ENCODE measurements at regions of chr10 and their contacts with region 1.

Region 1: DNA sequence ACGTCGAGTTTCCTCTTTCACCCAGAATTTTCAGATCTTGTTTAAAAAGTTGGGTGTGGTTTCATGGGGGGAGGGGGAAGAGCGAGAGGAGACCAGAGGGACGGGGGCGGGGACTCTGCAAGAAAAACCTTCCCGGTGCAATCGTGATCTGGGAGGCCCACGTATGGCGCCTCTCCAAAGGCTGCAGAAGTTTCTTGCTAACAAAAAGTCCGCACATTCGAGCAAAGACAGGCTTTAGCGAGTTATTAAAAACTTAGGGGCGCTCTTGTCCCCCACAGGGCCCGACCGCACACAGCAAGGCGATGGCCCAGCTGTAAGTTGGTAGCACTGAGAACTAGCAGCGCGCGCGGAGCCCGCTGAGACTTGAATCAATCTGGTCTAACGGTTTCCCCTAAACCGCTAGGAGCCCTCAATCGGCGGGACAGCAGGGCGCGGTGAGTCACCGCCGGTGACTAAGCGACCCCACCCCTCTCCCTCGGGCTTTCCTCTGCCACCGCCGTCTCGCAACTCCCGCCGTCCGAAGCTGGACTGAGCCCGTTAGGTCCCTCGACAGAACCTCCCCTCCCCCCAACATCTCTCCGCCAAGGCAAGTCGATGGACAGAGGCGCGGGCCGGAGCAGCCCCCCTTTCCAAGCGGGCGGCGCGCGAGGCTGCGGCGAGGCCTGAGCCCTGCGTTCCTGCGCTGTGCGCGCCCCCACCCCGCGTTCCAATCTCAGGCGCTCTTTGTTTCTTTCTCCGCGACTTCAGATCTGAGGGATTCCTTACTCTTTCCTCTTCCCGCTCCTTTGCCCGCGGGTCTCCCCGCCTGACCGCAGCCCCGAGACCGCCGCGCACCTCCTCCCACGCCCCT is at the start of gene VIM:
- DNase-seq: peak; percentile 65 to 93 (median 88)
- ATAC-seq: peak; percentile 26
- H3K4me3 ChIP-seq: peak within 1 kb of the TSS; percentile 76 to 82
- H3K4me3 Mint-ChIP-seq: peak within 1 kb of the TSS; percentile 99
- H3K27ac ChIP-seq: peak within 1 kb of the TSS; percentile 92 to 98
- H3K27ac Mint-ChIP-seq: peak within 1 kb of the TSS; percentile 100
- H3K4me1 ChIP-seq: peaks cover 41% of the 10 kb centered on the region
- H3K4me1 Mint-ChIP-seq: peaks cover 50% of the 10 kb centered on the region
- H3K27me3 ChIP-seq: no peaks in the 10 kb centered on the region
- H3K27me3 Mint-ChIP-seq: no peaks in the 10 kb centered on the region
- CTCF ChIP-seq: no peak
- total RNA-seq, gene VIM: 776 to 783 TPM

Region 2: GRCh38 chr10:16843252-16843870 is 385.0 kb before region 1 on chr10:
- CTCF ChIA-PET with region 1: interaction called, 5 read pairs
- POLR2A ChIA-PET with region 1: interaction called, 3 read pairs
- intact Hi-C with region 1: loop called in 1 of 2 experiments (anchors 1 kb)
- DNase-seq: peak in 3 of 9 experiments; percentile 16 to 78 (median 63)
- ATAC-seq: peak; percentile 51
- H3K4me3 ChIP-seq: no peak overlapping the region
- H3K4me3 Mint-ChIP-seq: no peak overlapping the region
- H3K27ac ChIP-seq: no peak overlapping the region
- H3K27ac Mint-ChIP-seq: no peak overlapping the region
- H3K4me1 ChIP-seq: no peaks in the 10 kb centered on the region
- H3K4me1 Mint-ChIP-seq: no peaks in the 10 kb centered on the region
- H3K27me3 ChIP-seq: no peaks in the 10 kb centered on the region
- H3K27me3 Mint-ChIP-seq: no peaks in the 10 kb centered on the region
- CTCF ChIP-seq: peak; percentile 72

Region 3: GRCh38 chr10:17001961-17002749 is 226.2 kb before region 1 on chr10:
- CTCF ChIA-PET with region 1: no interaction called
- POLR2A ChIA-PET with region 1: interaction called, 4 read pairs
- intact Hi-C with region 1: loop called in 1 of 2 experiments (anchors 2 kb)
- DNase-seq: peak in 5 of 9 experiments; percentile 21 to 92 (median 43)
- ATAC-seq: peak; percentile 22
- H3K4me3 ChIP-seq: no peak overlapping the region
- H3K4me3 Mint-ChIP-seq: no peak overlapping the region
- H3K27ac ChIP-seq: peak overlapping the region; percentile 33 to 40
- H3K27ac Mint-ChIP-seq: peak overlapping the region; percentile 87
- H3K4me1 ChIP-seq: peaks cover 41% of the 10 kb centered on the region
- H3K4me1 Mint-ChIP-seq: peaks cover 47% of the 10 kb centered on the region
- H3K27me3 ChIP-seq: no peaks in the 10 kb centered on the region
- H3K27me3 Mint-ChIP-seq: no peaks in the 10 kb centered on the region
- CTCF ChIP-seq: no peak

Region 4: DNA sequence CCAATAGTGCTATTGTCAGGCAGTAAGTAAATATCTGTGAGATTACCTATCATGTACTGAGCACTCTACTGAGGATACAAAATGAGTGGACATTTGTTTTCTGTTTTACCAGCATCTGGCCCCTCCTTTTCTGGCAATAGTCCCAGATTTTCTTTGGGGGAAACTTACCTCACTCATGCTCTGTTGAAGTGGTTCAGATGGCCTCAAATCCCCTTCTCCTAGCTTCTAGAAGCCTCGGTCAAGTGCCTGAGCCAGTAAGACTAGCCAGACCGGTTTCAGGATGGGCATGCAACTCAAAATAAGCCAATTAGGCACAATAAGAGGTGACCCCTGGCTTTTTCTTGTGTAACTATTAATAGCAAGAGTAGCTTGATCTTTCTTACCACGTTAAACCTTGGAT is 46.6 kb before region 1 on chr10:
- CTCF ChIA-PET with region 1: no interaction called
- POLR2A ChIA-PET with region 1: interaction called, 3 read pairs
- intact Hi-C with region 1: loop called in 1 of 2 experiments (anchors 10 kb)
- DNase-seq: no peak
- ATAC-seq: no peak
- H3K4me3 ChIP-seq: no peak overlapping the region
- H3K4me3 Mint-ChIP-seq: no peak overlapping the region
- H3K27ac ChIP-seq: no peak overlapping the region
- H3K27ac Mint-ChIP-seq: peak overlapping the region; percentile 27
- H3K4me1 ChIP-seq: no peaks in the 10 kb centered on the region
- H3K4me1 Mint-ChIP-seq: peaks cover 4% of the 10 kb centered on the region
- H3K27me3 ChIP-seq: no peaks in the 10 kb centered on the region
- H3K27me3 Mint-ChIP-seq: no peaks in the 10 kb centered on the region
- CTCF ChIP-seq: no peak

Region 5: GRCh38 chr10:17216217-17216900 is 12.0 kb before region 1 on chr10:
- CTCF ChIA-PET with region 1: interaction called, 8 read pairs
- POLR2A ChIA-PET with region 1: interaction called, 9 read pairs
- intact Hi-C with region 1: loop called in 1 of 2 experiments (anchors 1 kb)
- DNase-seq: peak in 4 of 9 experiments; percentile 29 to 76 (median 49)
- ATAC-seq: peak; percentile 89
- H3K4me3 ChIP-seq: no peak overlapping the region
- H3K4me3 Mint-ChIP-seq: no peak overlapping the region
- H3K27ac ChIP-seq: peak overlapping the region; percentile 21 to 71
- H3K27ac Mint-ChIP-seq: peak overlapping the region; percentile 80
- H3K4me1 ChIP-seq: no peaks in the 10 kb centered on the region
- H3K4me1 Mint-ChIP-seq: peaks cover 11% of the 10 kb centered on the region
- H3K27me3 ChIP-seq: no peaks in the 10 kb centered on the region
- H3K27me3 Mint-ChIP-seq: no peaks in the 10 kb centered on the region
- CTCF ChIP-seq: no peak

Region 6: GRCh38 chr10:17643755-17644484 is 415.6 kb after region 1 on chr10 and contains the start of gene STAM:
- CTCF ChIA-PET with region 1: no interaction called
- POLR2A ChIA-PET with region 1: interaction called, 7 read pairs
- intact Hi-C with region 1: loop called (anchors 5 to 10 kb)
- DNase-seq: peak; percentile 87 to 96 (median 93)
- ATAC-seq: peak; percentile 86
- H3K4me3 ChIP-seq: peak within 1 kb of the TSS; percentile 84 to 85
- H3K4me3 Mint-ChIP-seq: peak within 1 kb of the TSS; percentile 99
- H3K27ac ChIP-seq: peak within 1 kb of the TSS; percentile 88 to 97
- H3K27ac Mint-ChIP-seq: peak within 1 kb of the TSS; percentile 100
- H3K4me1 ChIP-seq: peaks cover 40% of the 10 kb centered on the region
- H3K4me1 Mint-ChIP-seq: peaks cover 57% of the 10 kb centered on the region
- H3K27me3 ChIP-seq: no peaks in the 10 kb centered on the region
- H3K27me3 Mint-ChIP-seq: no peaks in the 10 kb centered on the region
- CTCF ChIP-seq: no peak
- total RNA-seq, gene STAM: 44.0 to 47.9 TPM